PC-9 (cell line): ENCODE measurements at regions of chr12 and their contacts with region 1.

Region 1: DNA sequence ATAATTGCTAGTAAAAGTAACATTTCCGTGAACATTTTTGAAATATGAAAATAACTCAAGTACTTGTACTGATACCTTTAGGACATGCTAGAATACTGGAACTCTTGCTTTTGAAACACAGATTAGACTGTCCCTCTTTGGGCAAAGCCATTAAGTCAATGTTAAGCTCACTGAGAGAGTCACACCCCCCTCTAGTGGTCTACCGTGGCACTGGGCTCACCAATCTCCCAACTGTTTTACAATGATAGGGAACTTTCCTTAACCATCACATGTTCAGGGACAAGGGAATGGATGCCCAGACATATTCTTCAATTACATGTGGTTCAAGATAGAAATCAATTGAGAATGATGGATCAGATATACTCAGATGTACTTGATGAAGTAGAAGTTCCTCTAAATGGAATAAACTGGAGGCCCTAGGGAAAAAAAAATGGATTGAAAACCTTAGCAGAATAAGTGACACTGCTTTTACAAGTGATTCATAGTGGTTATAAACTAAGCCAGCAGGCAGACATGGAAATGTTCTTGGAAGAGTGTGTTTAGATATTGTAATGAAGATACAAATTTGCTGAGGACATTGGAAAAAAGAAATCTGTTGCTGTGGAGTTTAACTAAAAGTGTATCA is 17.8 kb downstream of the NANOG start:
- DNase-seq: peak; percentile 70 to 77
- H3K4me3 ChIP-seq: no peak overlapping the region
- H3K27ac ChIP-seq: no peak overlapping the region
- H3K4me1 ChIP-seq: peaks cover 6% of the 10 kb centered on the region
- H3K27me3 ChIP-seq: no peaks in the 10 kb centered on the region
- CTCF ChIP-seq: peak; percentile 95

Region 2: GRCh38 chr12:7583571-7583970 is 223.4 kb before region 1 on chr12:
- CTCF ChIA-PET with region 1: no interaction called
- POLR2A ChIA-PET with region 1: no interaction called
- intact Hi-C with region 1: no loop called
- DNase-seq: no peak
- H3K4me3 ChIP-seq: no peak overlapping the region
- H3K27ac ChIP-seq: peak overlapping the region; percentile 82
- H3K4me1 ChIP-seq: peaks cover 20% of the 10 kb centered on the region
- H3K27me3 ChIP-seq: no peaks in the 10 kb centered on the region
- CTCF ChIP-seq: no peak

Region 3: DNA sequence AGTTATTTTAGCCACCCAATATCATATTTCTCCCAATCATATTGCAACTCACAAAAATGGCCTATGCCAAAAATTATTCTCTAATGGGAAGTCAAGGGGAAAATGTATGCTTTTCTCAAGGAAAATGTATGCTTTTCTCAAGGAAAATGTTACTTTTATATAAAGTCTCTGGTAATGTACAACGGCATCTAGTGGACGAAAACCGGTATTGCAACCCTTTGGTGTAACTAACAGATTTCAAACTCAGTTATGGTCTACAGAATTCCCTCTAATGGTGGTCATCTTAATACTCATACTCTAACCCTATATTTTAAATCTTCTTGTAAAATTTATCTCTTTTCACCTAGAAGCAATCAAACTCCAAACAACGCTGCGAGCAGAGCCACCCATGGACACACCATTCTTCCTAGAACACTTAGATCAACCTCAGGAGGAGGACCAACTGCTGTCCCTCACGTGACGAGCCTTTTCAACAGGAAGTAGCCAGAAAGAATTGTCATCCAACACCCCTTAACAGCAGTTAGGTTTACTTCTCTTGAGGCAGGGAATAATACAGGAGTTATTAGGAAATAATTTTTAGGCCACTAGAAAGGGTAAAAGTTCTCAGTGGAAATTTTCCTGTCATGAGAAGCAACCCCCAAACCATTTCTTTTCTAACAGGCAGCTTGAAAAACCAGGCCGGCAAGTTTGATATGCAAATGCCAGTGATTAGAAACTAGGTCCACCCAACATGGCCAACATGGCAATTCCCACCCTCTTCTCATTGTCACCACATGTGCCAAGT is 161.4 kb before region 1 on chr12:
- CTCF ChIA-PET with region 1: interaction called, 3 read pairs
- POLR2A ChIA-PET with region 1: no interaction called
- intact Hi-C with region 1: loop called (anchors 2 kb)
- DNase-seq: peak; percentile 21 to 44
- H3K4me3 ChIP-seq: no peak overlapping the region
- H3K27ac ChIP-seq: no peak overlapping the region
- H3K4me1 ChIP-seq: no peaks in the 10 kb centered on the region
- H3K27me3 ChIP-seq: no peaks in the 10 kb centered on the region
- CTCF ChIP-seq: peak; percentile 97

Region 4: DNA sequence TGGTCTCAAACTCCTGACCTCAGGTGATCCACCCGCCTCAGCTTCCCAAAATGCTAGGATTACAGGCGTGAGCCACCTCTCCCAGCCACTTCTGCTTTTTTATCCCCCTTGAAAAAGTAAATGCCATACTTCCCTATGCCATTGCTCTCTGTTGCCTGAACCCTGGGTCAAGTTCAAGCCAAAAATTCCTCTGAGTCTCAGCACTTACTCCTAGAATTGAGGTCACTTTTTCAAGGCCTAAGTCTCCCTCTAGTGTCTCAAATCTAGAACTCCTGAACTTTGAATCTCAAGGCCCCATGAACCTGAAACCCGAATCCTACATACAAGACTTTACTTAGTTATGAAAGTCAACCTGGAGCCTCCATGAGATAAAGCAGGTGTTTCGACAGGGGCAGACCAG is 139.8 kb before region 1 on chr12:
- CTCF ChIA-PET with region 1: no interaction called
- POLR2A ChIA-PET with region 1: interaction called, 10 read pairs
- intact Hi-C with region 1: no loop called
- DNase-seq: peak in 1 of 2 experiments; percentile 39
- H3K4me3 ChIP-seq: no peak overlapping the region
- H3K27ac ChIP-seq: no peak overlapping the region
- H3K4me1 ChIP-seq: no peaks in the 10 kb centered on the region
- H3K27me3 ChIP-seq: no peaks in the 10 kb centered on the region
- CTCF ChIP-seq: peak; percentile 60

Region 5: GRCh38 chr12:7678738-7679137 is 128.2 kb before region 1 on chr12:
- CTCF ChIA-PET with region 1: interaction called, 4 read pairs
- POLR2A ChIA-PET with region 1: no interaction called
- intact Hi-C with region 1: loop called (anchors 1 kb)
- DNase-seq: no peak
- H3K4me3 ChIP-seq: no peak overlapping the region
- H3K27ac ChIP-seq: no peak overlapping the region
- H3K4me1 ChIP-seq: no peaks in the 10 kb centered on the region
- H3K27me3 ChIP-seq: no peaks in the 10 kb centered on the region
- CTCF ChIP-seq: no peak

Region 6: DNA sequence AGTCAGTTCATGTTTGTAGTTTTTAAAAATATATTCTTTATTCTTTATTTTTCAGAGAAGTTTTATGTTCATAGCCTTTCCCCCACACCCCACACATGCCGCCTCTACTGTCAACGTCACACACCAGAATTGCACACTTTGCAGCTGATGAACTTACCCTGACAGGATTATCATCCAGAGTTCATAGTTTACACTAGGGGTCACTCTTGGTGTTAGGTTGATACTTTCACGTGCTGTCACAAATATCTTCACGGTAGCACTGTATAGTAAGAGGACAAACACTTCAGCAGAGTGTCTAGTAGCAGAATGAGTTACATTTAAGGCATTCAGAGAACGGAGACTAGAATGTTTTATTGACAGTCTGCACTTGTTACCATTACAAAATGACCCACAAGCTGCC is 90.6 kb before region 1 on chr12:
- CTCF ChIA-PET with region 1: interaction called, 11 read pairs
- POLR2A ChIA-PET with region 1: no interaction called
- intact Hi-C with region 1: loop called (anchors 1 kb)
- DNase-seq: peak; percentile 2 to 52
- H3K4me3 ChIP-seq: no peak overlapping the region
- H3K27ac ChIP-seq: no peak overlapping the region
- H3K4me1 ChIP-seq: no peaks in the 10 kb centered on the region
- H3K27me3 ChIP-seq: no peaks in the 10 kb centered on the region
- CTCF ChIP-seq: no peak; the same call in 1 of the 2 replicates

Region 7: GRCh38 chr12:7884689-7885088 is 77.7 kb after region 1 on chr12:
- CTCF ChIA-PET with region 1: no interaction called
- POLR2A ChIA-PET with region 1: interaction called, 14 read pairs
- intact Hi-C with region 1: no loop called
- DNase-seq: peak in 1 of 2 experiments; percentile 40
- H3K4me3 ChIP-seq: no peak overlapping the region
- H3K27ac ChIP-seq: no peak overlapping the region
- H3K4me1 ChIP-seq: peaks cover 9% of the 10 kb centered on the region
- H3K27me3 ChIP-seq: no peaks in the 10 kb centered on the region
- CTCF ChIP-seq: no peak